Activated naive CD4-positive, alpha-beta T cell treated with anti-CD3 and anti-CD28 coated beads for 36 hours (primary cell): ENCODE measurements at regions of chr1 and their contacts with region 1.

Region 1: DNA sequence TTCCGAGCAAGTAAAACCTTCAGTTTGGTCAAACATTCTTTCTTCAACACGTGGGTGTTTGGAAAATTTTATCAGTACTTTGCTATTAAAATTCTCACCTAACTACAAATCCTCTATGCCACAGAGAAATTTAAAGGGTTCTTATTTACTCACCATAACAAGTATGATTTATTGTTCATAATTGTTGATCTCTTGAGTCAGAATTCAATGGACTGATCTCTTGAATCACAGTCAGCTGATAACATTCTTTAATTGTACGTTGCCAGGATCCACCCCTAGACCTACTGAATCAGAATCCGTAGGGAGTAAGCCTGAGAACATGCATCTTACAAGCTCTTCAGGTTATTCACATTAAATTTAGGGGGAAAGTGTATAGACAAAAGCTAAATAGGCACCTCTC is 51.2 kb downstream of the DIPK1A start:
- DNase-seq: no peak
- H3K4me3 Mint-ChIP-seq: no peak overlapping the region
- H3K27ac Mint-ChIP-seq: no peak overlapping the region
- H3K4me1 Mint-ChIP-seq: peaks cover 24% of the 10 kb centered on the region
- H3K27me3 Mint-ChIP-seq: no peaks in the 10 kb centered on the region

Region 2: GRCh38 chr1:92764116-92764515 is 146.0 kb before region 1 on chr1:
- CTCF ChIA-PET with region 1: no interaction called
- intact Hi-C with region 1: no loop called
- DNase-seq: no peak
- H3K4me3 Mint-ChIP-seq: no peak overlapping the region
- H3K27ac Mint-ChIP-seq: no peak overlapping the region
- H3K4me1 Mint-ChIP-seq: no peaks in the 10 kb centered on the region
- H3K27me3 Mint-ChIP-seq: no peaks in the 10 kb centered on the region

Region 3: DNA sequence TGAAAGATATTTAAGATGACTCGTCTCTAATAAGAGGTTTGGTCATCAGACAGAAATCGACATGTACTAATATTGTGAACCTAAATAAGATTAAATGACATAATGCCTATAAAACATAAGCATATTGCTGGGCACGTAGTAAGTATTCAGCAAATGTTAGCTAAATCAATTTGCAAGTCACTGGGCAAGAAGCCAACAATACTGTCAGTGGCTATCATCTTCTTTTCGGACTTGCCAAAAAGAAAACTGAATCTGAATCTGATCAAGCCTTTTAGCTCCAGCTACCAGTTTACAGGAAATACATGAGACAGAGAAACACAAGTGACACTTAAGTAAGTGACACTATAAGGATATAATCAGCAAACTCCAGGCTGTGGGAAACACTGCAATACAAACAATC is 32.3 kb before region 1 on chr1:
- CTCF ChIA-PET with region 1: no interaction called
- intact Hi-C with region 1: loop called (anchors 5 kb)
- DNase-seq: peak; percentile 14
- H3K4me3 Mint-ChIP-seq: peak overlapping the region; percentile 58
- H3K27ac Mint-ChIP-seq: peak overlapping the region; percentile 72
- H3K4me1 Mint-ChIP-seq: peaks cover 27% of the 10 kb centered on the region
- H3K27me3 Mint-ChIP-seq: no peaks in the 10 kb centered on the region